GM10248 (cell line): ENCODE measurements at regions of chr11 and their contacts with region 1.

Region 1: DNA sequence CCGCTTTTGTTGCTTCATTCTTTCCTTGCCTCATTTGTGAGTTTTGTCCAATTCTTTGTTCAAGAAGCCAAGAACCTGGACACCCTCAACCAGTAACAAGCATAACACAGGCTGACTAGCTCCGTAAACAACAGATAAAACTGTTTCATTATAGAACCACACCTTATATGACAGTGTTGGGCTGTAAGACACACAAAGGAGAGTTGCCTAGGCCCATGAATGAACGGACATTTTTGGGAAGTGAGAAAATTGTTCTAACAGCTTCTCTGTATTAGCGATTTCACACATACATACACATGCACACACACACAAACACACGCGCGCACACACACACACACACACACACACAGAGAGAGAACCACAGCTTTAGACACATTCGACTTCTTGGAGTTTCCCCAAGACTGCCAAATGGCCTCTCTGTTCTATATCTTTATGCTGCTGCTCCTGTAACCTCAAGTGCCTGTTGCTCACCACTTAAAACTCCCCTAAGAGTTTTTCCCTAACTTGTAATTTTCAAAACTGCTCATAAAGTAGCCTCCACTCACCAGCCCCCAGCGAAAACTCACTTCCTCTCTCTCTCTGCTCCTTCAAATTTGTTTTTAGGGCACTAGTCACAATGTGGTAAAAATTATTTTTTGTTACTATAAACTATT is 35.9 kb downstream of the CTSC start:
- DNase-seq: peak; percentile 35
- CTCF ChIP-seq: no peak

Region 2: DNA sequence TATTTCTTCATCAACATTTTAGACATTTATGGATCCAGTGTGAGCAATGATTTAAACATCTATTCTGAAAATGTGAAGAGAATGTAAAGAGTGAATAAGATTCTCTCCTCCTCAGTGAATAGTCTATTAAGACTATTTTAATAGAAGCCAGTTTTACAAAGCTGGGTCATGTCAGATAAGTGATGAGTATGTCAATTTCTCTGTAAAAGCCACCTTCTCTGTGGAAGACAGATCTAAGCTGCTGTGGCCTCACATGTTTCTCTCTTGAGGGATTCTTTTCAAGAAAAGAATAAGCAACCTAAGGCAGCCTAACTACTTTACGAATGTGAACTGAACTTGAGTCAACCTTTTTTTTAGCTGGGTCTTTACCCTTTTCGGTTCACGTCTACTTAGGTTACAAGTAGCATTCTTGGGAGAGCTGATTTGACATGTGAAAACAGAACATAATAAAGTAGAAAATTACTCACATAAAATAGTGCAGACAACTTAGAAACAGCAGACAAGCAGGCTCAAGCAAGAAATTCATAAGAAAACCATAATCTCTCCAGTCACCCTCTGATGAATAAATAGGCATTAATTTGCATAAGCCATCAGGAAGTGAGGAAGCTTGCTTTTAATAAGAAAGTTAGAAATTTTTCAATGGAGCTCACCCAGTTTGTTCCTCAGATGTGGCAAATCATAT is 26.0 kb after region 1 on chr11:
- CTCF ChIA-PET with region 1: interaction called, 4 read pairs
- POLR2A ChIA-PET with region 1: interaction called, 13 read pairs
- DNase-seq: no peak
- CTCF ChIP-seq: no peak

Region 3: GRCh38 chr11:88494848-88495247 is 193.2 kb after region 1 on chr11:
- CTCF ChIA-PET with region 1: no interaction called
- POLR2A ChIA-PET with region 1: no interaction called
- DNase-seq: no peak
- CTCF ChIP-seq: peak; percentile 12